Activated CD8-positive, alpha-beta T cell treated with anti-CD3 and anti-CD28 coated beads, Interleukin-2, amount 10 ng/mL, durations not matched to agents 7 days and 5 days (primary cell): ENCODE measurements at regions of chr3 and their contacts with region 1.

Region 1: GRCh38 chr3:114383875-114384557 is 90.2 kb downstream of the TIGIT start:
- DNase-seq: peak; percentile 79
- ATAC-seq: peak; percentile 96
- H3K4me3 Mint-ChIP-seq: peak overlapping the region; percentile 60
- H3K27ac Mint-ChIP-seq: no peak overlapping the region
- H3K4me1 Mint-ChIP-seq: peaks cover 11% of the 10 kb centered on the region
- H3K27me3 Mint-ChIP-seq: no peaks in the 10 kb centered on the region

Region 2: GRCh38 chr3:114362815-114363214 is 21.2 kb before region 1 on chr3:
- CTCF ChIA-PET with region 1: interaction called, 20 read pairs
- POLR2A ChIA-PET with region 1: no interaction called
- DNase-seq: no peak
- ATAC-seq: no peak
- H3K4me3 Mint-ChIP-seq: no peak overlapping the region
- H3K27ac Mint-ChIP-seq: no peak overlapping the region
- H3K4me1 Mint-ChIP-seq: no peaks in the 10 kb centered on the region
- H3K27me3 Mint-ChIP-seq: no peaks in the 10 kb centered on the region

Region 3: DNA sequence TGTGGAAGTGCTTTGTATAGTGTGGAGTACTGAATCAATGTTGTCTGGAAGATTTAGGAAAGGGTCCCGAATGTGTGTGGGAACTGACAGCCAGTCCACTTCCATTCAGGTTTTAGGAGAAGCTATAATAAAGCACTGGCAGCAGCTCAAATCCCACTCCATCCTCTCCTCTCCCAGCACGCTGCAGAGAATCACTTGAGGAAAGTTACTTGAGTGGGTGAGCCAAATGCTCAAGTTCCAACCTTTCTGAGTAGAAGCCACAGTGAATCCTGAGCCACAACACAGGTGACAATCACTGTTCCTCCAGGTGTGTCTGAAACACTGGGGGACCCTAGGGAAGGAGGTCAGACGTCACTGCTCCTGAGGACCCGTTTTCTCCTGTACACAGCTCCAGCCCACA is 16.4 kb after region 1 on chr3:
- CTCF ChIA-PET with region 1: interaction called, 30 read pairs
- POLR2A ChIA-PET with region 1: no interaction called
- DNase-seq: no peak
- ATAC-seq: no peak
- H3K4me3 Mint-ChIP-seq: no peak overlapping the region
- H3K27ac Mint-ChIP-seq: no peak overlapping the region
- H3K4me1 Mint-ChIP-seq: no peaks in the 10 kb centered on the region
- H3K27me3 Mint-ChIP-seq: no peaks in the 10 kb centered on the region

Region 4: GRCh38 chr3:114408736-114409670 is 25.0 kb after region 1 on chr3:
- CTCF ChIA-PET with region 1: interaction called, 252 read pairs
- POLR2A ChIA-PET with region 1: interaction called, 3 read pairs
- DNase-seq: no peak
- ATAC-seq: no peak
- H3K4me3 Mint-ChIP-seq: no peak overlapping the region
- H3K27ac Mint-ChIP-seq: no peak overlapping the region
- H3K4me1 Mint-ChIP-seq: peaks cover 2% of the 10 kb centered on the region
- H3K27me3 Mint-ChIP-seq: no peaks in the 10 kb centered on the region

Region 5: DNA sequence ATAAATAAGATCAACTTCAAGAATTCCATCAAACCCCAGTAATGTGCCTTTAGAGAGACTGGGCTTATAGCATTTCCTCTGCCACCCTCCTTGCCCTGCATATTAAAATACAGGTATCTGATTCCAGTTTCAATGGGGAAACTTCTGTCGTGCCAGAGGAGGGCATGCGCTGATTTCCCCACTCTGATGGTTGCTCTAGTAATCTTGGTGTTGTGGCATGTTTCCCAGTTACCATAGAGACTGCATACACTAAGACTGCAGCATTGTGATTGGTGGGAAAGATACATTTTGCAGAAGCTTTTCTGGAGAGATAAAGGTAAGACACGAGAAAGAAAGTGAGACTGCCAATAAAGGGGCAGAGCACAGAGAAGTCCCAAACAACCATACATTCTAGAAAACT is 135.4 kb after region 1 on chr3:
- CTCF ChIA-PET with region 1: no interaction called
- POLR2A ChIA-PET with region 1: no interaction called
- DNase-seq: no peak
- ATAC-seq: no peak
- H3K4me3 Mint-ChIP-seq: no peak overlapping the region
- H3K27ac Mint-ChIP-seq: no peak overlapping the region
- H3K4me1 Mint-ChIP-seq: no peaks in the 10 kb centered on the region
- H3K27me3 Mint-ChIP-seq: no peaks in the 10 kb centered on the region